ENCODE measurements at regions of chr7 and their contacts with region 1.

Region 1: DNA sequence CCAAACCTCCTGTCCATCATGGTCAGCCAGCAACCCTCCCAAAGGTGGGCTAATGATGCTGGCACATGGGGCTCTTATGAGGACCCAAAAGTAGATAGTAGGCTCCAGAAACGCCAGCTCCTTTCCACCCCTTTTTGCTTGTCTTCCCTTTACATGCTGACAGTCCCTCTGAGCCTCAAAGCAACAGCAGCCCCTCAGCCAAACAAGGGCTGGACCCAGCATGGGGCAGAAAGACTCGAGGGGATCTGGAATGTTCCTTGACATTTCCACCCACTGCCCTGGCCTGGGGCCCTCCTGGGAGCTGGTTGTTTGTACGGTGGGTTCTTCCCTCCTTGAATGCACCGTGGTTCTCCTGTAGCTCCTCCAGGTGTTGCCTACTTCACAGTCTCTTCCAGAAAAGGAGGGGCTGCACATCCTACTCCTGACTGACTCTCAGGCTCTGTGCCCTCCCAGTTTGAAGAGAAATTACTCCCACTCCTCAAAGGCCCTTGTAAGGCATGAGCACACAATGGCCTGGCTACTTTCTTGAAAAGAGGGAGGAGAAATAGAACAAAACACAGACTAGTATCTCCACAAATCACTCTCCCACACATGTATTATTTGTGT is 21.5 kb upstream of the NUDCD3 start:
- DNase-seq: no peak
- ATAC-seq: no peak
- H3K4me3 ChIP-seq: no peak overlapping the region
- H3K27ac ChIP-seq: no peak overlapping the region
- H3K4me1 ChIP-seq: no peaks in the 10 kb centered on the region
- H3K27me3 ChIP-seq: no peaks in the 10 kb centered on the region
- CTCF ChIP-seq: no peak

Region 2: DNA sequence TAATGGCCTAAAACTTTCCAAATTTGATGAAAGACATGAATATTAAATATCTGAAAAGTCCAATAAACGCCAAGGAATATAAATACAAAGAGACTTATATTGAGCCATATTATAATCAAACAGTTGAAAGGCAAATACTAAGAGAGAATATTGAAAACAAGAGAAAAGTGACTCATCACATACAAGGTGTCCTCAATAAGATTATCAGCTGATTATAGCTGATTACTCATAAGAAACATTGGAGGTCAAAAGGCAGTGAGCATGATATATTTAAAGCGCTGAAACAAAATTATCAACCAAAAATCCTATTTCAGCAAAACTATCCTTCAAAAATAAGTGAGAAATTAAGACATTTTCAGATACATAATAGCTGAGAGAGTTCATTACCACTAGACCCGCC is 36.9 kb after region 1 on chr7:
- intact Hi-C with region 1: no loop called
- DNase-seq: no peak
- ATAC-seq: no peak
- H3K4me3 ChIP-seq: no peak overlapping the region
- H3K27ac ChIP-seq: no peak overlapping the region
- H3K4me1 ChIP-seq: no peaks in the 10 kb centered on the region
- H3K27me3 ChIP-seq: peaks cover 0 to 2% (median 0%) of the 10 kb centered on the region in 3 donors
- CTCF ChIP-seq: no peak

Region 3: GRCh38 chr7:44559485-44559884 is 47.5 kb after region 1 on chr7:
- intact Hi-C with region 1: loop called in 1 of 2 experiments (anchors 5 kb)
- DNase-seq: no peak
- ATAC-seq: no peak
- H3K4me3 ChIP-seq: no peak overlapping the region
- H3K27ac ChIP-seq: no peak overlapping the region
- H3K4me1 ChIP-seq: peaks cover 4% of the 10 kb centered on the region
- H3K27me3 ChIP-seq: no peaks in the 10 kb centered on the region
- CTCF ChIP-seq: no peak